ENCODE measurements at regions of chr12 and their contacts with region 1.

Region 1: GRCh38 chr12:93380480-93381121 is 2.9 kb downstream of the NUDT4 start:
- DNase-seq: peak in 2 of 5 donors; percentile 82
- H3K4me3 ChIP-seq: peak overlapping the region; percentile 95 to 100 (median 95)
- H3K27ac ChIP-seq: peak overlapping the region; percentile 38 to 95
- H3K4me1 ChIP-seq: peaks cover 3 to 11% (median 10%) of the 10 kb centered on the region in 3 donors
- H3K27me3 ChIP-seq: no peaks in the 10 kb centered on the region
- CTCF ChIP-seq: peak; percentile 20

Region 2: GRCh38 chr12:92796650-92797049 is 584.0 kb before region 1 on chr12:
- intact Hi-C with region 1: no loop called
- DNase-seq: no peak
- H3K4me3 ChIP-seq: no peak overlapping the region
- H3K27ac ChIP-seq: no peak overlapping the region
- H3K4me1 ChIP-seq: no peaks in the 10 kb centered on the region
- H3K27me3 ChIP-seq: no peaks in the 10 kb centered on the region
- CTCF ChIP-seq: no peak

Region 3: DNA sequence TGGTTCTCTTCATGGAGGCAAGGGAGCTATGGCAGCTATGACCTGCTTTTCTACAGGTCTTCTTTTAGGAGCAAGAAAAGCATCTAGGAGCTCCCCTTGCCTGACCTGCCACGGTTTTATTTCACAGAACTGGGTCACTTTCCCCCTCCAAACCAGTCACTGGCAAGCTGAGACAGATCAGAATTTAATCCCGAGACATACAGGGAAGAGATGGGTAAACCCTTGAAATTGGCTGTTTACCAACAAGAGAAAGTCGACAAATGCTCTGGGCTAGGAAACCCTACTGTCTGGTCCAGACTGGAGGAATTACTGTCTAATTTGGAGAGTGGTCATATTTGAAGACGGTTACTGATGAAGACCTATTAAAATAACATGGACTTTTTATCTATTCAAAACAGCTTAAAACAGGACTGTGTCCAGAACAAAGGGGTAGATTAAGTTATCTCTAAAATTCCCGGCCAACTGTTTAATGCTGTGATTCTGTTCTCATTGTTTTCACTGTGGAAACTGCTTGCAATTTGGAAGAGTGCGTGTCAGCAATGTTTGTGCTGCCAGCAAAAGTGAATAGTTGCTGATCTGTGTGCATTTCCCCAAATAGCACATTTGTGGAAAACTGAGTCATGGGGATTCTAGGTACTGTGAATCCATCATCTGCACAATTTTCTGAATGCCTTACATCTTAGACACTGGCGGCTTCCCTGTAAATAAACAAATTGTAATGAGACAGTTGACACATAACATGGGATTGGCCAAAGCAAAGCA is 378.1 kb before region 1 on chr12:
- intact Hi-C with region 1: loop called (anchors 10 kb)
- DNase-seq: no peak
- H3K4me3 ChIP-seq: no peak overlapping the region
- H3K27ac ChIP-seq: no peak overlapping the region
- H3K4me1 ChIP-seq: no peaks in the 10 kb centered on the region
- H3K27me3 ChIP-seq: no peaks in the 10 kb centered on the region
- CTCF ChIP-seq: no peak

Measured in kidney (tissue), 22 donors.